WTC11 (cell line): ENCODE measurements at regions of chr1 and their contacts with region 1.

Region 1: GRCh38 chr1:202210385-202210784 is 16.8 kb downstream of the LGR6 start:
- DNase-seq: peak; percentile 50
- ATAC-seq: peak; percentile 33
- H3K4me3 Mint-ChIP-seq: no peak overlapping the region
- H3K27ac Mint-ChIP-seq: no peak overlapping the region
- H3K4me1 Mint-ChIP-seq: peaks cover 9% of the 10 kb centered on the region
- H3K27me3 Mint-ChIP-seq: peaks cover 11% of the 10 kb centered on the region
- CTCF ChIP-seq: no peak

Region 2: GRCh38 chr1:202184750-202185460 is 25.5 kb before region 1 on chr1:
- CTCF ChIA-PET with region 1: interaction called, 31 read pairs
- POLR2A ChIA-PET with region 1: no interaction called
- DNase-seq: peak; percentile 98
- ATAC-seq: peak; percentile 94
- H3K4me3 Mint-ChIP-seq: peak overlapping the region; percentile 38
- H3K27ac Mint-ChIP-seq: 0 out of 2 replicates have a peak overlapping the region, but pooled peaks have one; percentile 78
- H3K4me1 Mint-ChIP-seq: peaks cover 13% of the 10 kb centered on the region
- H3K27me3 Mint-ChIP-seq: peaks cover 4% of the 10 kb centered on the region; the same call in 1 of the 2 replicates
- CTCF ChIP-seq: peak; percentile 85

Region 3: GRCh38 chr1:202221911-202222909 is 11.8 kb after region 1 on chr1:
- CTCF ChIA-PET with region 1: interaction called, 14 read pairs
- POLR2A ChIA-PET with region 1: no interaction called
- DNase-seq: no peak
- ATAC-seq: peak; percentile 26
- H3K4me3 Mint-ChIP-seq: no peak overlapping the region; the same call in 1 of the 2 replicates
- H3K27ac Mint-ChIP-seq: no peak overlapping the region
- H3K4me1 Mint-ChIP-seq: peaks cover 13% of the 10 kb centered on the region
- H3K27me3 Mint-ChIP-seq: peaks cover 8% of the 10 kb centered on the region; the same call in 1 of the 2 replicates
- CTCF ChIP-seq: no peak

Region 4: GRCh38 chr1:202235856-202236837 is 25.8 kb after region 1 on chr1:
- CTCF ChIA-PET with region 1: interaction called, 76 read pairs
- POLR2A ChIA-PET with region 1: no interaction called
- DNase-seq: peak; percentile 94
- ATAC-seq: peak; percentile 75
- H3K4me3 Mint-ChIP-seq: no peak overlapping the region
- H3K27ac Mint-ChIP-seq: peak overlapping the region; percentile 78
- H3K4me1 Mint-ChIP-seq: peaks cover 45% of the 10 kb centered on the region
- H3K27me3 Mint-ChIP-seq: 0 out of 2 replicates have a peak, but pooled peaks cover 4% of the 10 kb centered on the region
- CTCF ChIP-seq: peak; percentile 98

Region 5: GRCh38 chr1:202315576-202316168 is 105.3 kb after region 1 on chr1:
- CTCF ChIA-PET with region 1: interaction called, 25 read pairs
- POLR2A ChIA-PET with region 1: no interaction called
- DNase-seq: peak; percentile 90
- ATAC-seq: peak; percentile 97
- H3K4me3 Mint-ChIP-seq: no peak overlapping the region
- H3K27ac Mint-ChIP-seq: no peak overlapping the region
- H3K4me1 Mint-ChIP-seq: peaks cover 15% of the 10 kb centered on the region
- H3K27me3 Mint-ChIP-seq: no peaks in the 10 kb centered on the region
- CTCF ChIP-seq: peak; percentile 74; the same call in 1 of the 2 replicates